ENCODE measurements at regions of chr13 and their contacts with region 1.

Region 1: DNA sequence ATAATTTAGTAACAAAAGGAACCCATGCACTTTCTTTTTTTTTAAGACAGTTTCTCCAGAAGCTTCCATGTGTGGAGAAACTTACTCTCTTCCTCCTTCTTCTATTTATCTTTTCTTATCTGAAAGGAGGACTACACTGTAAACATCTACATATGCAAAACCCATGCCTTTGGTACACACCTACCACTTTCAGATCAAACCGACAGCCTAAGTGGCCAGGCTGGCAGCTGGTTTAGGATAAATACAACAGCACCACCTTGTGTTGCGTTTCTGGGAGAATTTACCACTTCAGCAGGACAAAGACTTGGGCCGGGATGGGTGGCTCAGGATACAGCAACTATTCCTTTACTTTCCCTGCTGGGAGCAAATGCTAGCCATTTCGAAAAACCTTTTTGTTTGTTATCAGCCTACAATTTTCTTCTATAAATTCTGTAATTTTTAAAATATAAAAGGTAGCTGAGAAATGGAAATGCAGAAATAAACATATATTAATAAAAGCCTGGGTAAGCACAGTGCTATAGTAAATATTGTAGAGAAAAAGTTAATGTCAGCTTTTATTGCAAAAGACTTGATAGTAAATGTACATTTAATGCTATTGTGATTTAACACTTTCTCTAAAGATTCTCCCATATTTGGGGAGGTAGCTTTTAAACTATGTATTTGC is 94.0 kb upstream of the RFC3 start:
- ATAC-seq: peak; percentile 65 to 99 (median 96)
- H3K4me3 ChIP-seq: no peak overlapping the region
- H3K27ac ChIP-seq: no peak overlapping the region
- H3K4me1 ChIP-seq: peaks cover 3 to 8% of the 10 kb centered on the region in 2 donors

Region 2: DNA sequence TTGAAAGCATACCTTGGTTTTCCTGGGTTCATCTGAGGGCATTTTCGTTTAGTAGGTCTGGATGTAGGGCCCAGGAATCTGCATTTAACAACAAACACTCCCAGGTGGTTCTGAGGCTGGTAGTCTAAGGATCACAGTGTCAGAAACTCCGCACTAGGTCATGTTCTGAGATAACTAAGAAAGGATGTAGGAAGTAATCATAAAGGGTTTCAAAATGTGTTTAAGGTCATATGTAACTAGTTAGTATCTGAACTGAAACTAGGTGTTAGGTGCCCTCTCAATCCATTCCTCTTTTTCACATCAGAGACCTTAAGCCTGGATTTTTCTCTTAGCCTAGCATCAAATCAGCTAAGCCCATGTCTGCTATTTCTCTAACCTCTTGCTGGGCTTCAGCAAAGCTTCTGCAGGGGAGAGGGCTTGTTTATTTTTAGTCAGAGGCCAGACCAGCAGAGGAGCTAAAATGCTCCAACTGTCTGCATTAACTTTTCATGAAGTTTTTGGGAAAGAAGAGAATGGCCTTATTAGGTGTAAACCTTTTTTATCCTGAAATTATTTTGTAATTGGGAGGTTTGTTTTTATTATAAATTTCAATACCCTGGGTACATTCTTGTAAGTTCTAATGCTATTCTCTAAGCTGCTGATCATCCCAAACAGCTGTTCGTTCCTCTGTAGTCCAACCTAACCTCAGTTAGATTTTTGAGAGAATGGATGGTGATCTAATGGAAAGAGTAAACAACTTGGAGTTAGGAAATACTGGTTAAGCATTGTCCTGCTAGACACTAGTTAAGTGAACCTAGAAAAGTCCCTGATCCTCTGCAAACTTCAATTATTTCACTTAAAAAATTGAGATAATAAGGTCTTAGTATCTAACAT is 168.7 kb before region 1 on chr13:
- in situ Hi-C with region 1: loop called in 1 of 9 experiments (anchors 25 kb)
- ATAC-seq: no peak
- H3K4me3 ChIP-seq: no peak overlapping the region
- H3K27ac ChIP-seq: no peak overlapping the region
- H3K4me1 ChIP-seq: no peaks in the 10 kb centered on the region

Region 3: DNA sequence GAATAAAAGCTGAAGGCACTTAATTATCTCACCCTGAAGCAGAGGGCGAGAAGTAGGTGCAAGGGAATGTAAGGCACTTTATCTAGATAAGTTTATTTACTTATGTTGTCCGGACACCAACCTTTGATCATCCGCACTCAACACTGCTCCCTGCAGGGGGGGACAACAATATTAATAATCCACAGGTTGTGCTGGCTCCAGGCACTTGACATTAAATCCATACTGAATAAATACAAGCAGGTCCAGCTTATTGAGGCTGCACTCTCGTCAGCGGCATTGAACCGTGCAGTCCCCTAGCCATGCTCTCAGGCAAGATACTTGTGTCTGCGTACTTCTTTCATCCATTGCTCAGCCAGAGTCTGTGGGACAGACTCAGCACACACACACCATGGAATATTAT is 843.7 kb after region 1 on chr13:
- in situ Hi-C with region 1: no loop called
- ATAC-seq: peak in 3 of 8 experiments; percentile 21 to 59 (median 35)
- H3K4me3 ChIP-seq: no peak overlapping the region
- H3K27ac ChIP-seq: no peak overlapping the region
- H3K4me1 ChIP-seq: no peaks in the 10 kb centered on the region